B cell (primary cell): ENCODE measurements at regions of chr17 and their contacts with region 1.

Region 1: GRCh38 chr17:21395764-21396163 is 19.6 kb downstream of the KCNJ12 start:
- DNase-seq: no peak
- ATAC-seq: no peak
- H3K4me3 ChIP-seq: no peak overlapping the region
- H3K4me3 Mint-ChIP-seq: no peak overlapping the region
- H3K27ac ChIP-seq: no peak overlapping the region
- H3K27ac Mint-ChIP-seq: no peak overlapping the region
- H3K4me1 ChIP-seq: no peaks in the 10 kb centered on the region
- H3K4me1 Mint-ChIP-seq: no peaks in the 10 kb centered on the region
- H3K27me3 ChIP-seq: no peaks in the 10 kb centered on the region
- H3K27me3 Mint-ChIP-seq: peaks cover 6% of the 10 kb centered on the region
- CTCF ChIP-seq: no peak

Region 2: DNA sequence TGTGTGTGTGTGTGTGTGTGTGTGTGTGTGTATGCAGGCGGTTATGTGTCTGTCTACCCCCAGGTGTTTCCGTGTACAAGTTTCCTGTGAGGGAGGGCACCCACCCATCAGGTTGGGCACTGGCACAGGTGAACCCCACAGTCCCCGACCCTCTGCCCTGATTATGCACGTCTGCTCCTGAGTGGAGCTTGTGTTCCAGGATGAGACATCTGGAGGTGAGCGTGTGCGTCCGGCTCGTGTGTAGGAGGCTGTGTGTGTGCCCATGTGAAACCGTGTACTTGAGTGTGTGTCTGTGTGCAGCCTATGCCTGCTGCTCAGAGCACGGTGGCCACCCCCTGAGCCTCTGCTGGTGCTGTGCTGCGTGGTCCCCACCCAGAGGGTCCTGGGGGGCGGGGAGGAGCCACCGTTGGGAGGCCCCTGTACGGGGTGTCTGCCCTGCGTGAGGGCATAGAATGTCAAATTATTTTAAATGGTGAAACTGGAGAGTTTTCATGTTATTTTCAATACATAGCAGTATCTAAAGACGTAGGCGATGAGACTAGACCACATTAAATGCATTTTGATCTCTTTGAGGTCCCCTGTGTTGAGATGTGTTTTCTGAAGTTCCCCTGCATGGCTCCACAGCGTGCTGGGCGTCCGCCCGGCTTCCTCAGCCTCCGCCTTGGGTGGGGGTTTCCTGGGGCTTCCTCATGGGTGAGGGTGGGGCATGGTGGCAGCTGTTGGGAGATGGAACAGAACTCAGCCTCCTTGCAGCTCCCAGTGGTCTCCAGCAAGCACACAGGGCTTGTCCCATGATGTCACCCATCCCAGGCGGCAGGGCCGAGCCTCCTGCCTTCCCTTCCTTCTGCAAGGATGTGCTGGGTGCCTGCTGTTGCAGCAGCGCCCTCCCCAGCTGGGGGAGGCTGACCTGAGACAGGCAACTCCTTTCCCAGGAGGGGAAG is 23.8 kb after region 1 on chr17:
- CTCF ChIA-PET with region 1: no interaction called
- POLR2A ChIA-PET with region 1: interaction called, 18 read pairs
- intact Hi-C with region 1: no loop called
- DNase-seq: no peak
- ATAC-seq: no peak
- H3K4me3 ChIP-seq: no peak overlapping the region
- H3K4me3 Mint-ChIP-seq: no peak overlapping the region
- H3K27ac ChIP-seq: no peak overlapping the region
- H3K27ac Mint-ChIP-seq: no peak overlapping the region
- H3K4me1 ChIP-seq: no peaks in the 10 kb centered on the region
- H3K4me1 Mint-ChIP-seq: no peaks in the 10 kb centered on the region
- H3K27me3 ChIP-seq: no peaks in the 10 kb centered on the region
- H3K27me3 Mint-ChIP-seq: peaks cover 1% of the 10 kb centered on the region
- CTCF ChIP-seq: no peak